HEK293 (cell line): ENCODE measurements at regions of chr16 and their contacts with region 1.

Region 1: GRCh38 chr16:87636072-87636684 is 33.9 kb downstream of the JPH3 start:
- H3K4me3 ChIP-seq: no peak overlapping the region
- H3K27ac ChIP-seq: no peak overlapping the region
- H3K4me1 ChIP-seq: no peaks in the 10 kb centered on the region; the same call in 1 of the 2 replicates
- CTCF ChIP-seq: peak; percentile 88

Region 2: DNA sequence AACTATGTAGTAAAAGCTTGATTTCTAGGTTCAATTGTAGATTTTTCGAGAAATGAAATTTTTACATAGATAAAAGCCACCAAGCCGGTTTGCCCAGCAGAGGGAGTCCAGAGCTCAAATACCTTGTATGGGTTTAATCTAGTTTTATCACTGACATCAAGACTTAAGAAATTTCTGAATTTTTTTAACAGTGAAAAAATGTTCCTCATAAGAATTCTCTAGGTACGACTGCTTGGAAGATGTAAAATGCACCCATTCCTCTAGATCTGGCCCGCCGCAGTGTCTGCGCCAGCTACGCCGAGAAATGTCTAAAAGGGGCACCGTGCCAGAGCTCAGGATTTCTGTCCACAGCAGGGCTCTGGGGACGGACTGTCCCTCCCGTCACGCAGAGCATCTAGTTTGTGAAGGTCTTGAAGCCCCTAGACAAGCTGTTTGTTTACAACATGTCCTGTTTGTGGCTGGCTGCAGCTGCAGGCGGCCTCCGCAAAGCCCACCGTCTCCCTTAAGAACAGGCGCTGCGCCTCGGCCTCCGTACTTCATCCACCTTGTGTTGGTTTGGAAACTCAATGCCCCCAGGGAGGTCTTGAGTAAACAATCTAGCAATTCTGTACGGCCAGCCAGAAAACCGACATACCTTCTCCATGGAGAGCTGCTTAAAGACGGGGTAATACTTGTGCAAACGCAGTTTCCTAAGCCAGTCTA is 219.2 kb before region 1 on chr16:
- CTCF ChIA-PET with region 1: interaction called, 18 read pairs
- POLR2A ChIA-PET with region 1: no interaction called
- H3K4me3 ChIP-seq: no peak overlapping the region
- H3K27ac ChIP-seq: no peak overlapping the region
- H3K4me1 ChIP-seq: no peaks in the 10 kb centered on the region
- CTCF ChIP-seq: no peak

Region 3: GRCh38 chr16:87461466-87461991 is 174.6 kb before region 1 on chr16:
- CTCF ChIA-PET with region 1: interaction called, 14 read pairs
- POLR2A ChIA-PET with region 1: no interaction called
- H3K4me3 ChIP-seq: peak overlapping the region; percentile 16; the same call in 1 of the 2 replicates
- H3K27ac ChIP-seq: no peak overlapping the region
- H3K4me1 ChIP-seq: peaks cover 29% of the 10 kb centered on the region
- CTCF ChIP-seq: 0 out of 2 replicates have a peak, but pooled peaks have one; percentile 48

Region 4: GRCh38 chr16:87571136-87571867 is 64.9 kb before region 1 on chr16:
- CTCF ChIA-PET with region 1: interaction called, 31 read pairs
- POLR2A ChIA-PET with region 1: no interaction called
- H3K4me3 ChIP-seq: no peak overlapping the region
- H3K27ac ChIP-seq: no peak overlapping the region
- H3K4me1 ChIP-seq: no peaks in the 10 kb centered on the region
- CTCF ChIP-seq: no peak

Region 5: DNA sequence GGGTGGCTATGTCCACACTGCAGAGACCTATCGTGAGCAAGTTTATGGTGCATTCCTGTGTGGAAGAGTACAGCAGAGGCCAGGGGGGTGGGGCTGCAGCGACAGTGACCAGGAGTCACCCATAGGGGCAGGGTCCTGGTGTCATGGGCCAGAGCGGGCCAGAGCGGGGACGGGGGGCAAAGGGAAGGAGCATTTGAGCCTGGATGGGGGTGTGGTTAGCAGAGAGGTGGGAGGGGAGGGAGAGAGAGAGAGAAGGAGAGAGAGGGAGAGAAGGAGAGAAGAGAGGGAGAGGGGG is 16.0 kb before region 1 on chr16:
- CTCF ChIA-PET with region 1: interaction called, 17 read pairs
- POLR2A ChIA-PET with region 1: interaction called, 3 read pairs
- H3K4me3 ChIP-seq: no peak overlapping the region
- H3K27ac ChIP-seq: no peak overlapping the region
- H3K4me1 ChIP-seq: no peaks in the 10 kb centered on the region
- CTCF ChIP-seq: no peak

Region 6: GRCh38 chr16:87692760-87693159 is 56.6 kb after region 1 on chr16:
- CTCF ChIA-PET with region 1: no interaction called
- POLR2A ChIA-PET with region 1: no interaction called
- H3K4me3 ChIP-seq: no peak overlapping the region
- H3K27ac ChIP-seq: no peak overlapping the region
- H3K4me1 ChIP-seq: no peaks in the 10 kb centered on the region
- CTCF ChIP-seq: 0 out of 2 replicates have a peak, but pooled peaks have one; percentile 43